AG04449 (cell line): ENCODE measurements at regions of chr13 and their contacts with region 1.

Region 1: GRCh38 chr13:45280751-45281634 is 60.0 kb downstream of the TPT1 start:
- DNase-seq: peak; percentile 29
- H3K4me3 ChIP-seq: no peak overlapping the region
- CTCF ChIP-seq: peak; percentile 88

Region 2: DNA sequence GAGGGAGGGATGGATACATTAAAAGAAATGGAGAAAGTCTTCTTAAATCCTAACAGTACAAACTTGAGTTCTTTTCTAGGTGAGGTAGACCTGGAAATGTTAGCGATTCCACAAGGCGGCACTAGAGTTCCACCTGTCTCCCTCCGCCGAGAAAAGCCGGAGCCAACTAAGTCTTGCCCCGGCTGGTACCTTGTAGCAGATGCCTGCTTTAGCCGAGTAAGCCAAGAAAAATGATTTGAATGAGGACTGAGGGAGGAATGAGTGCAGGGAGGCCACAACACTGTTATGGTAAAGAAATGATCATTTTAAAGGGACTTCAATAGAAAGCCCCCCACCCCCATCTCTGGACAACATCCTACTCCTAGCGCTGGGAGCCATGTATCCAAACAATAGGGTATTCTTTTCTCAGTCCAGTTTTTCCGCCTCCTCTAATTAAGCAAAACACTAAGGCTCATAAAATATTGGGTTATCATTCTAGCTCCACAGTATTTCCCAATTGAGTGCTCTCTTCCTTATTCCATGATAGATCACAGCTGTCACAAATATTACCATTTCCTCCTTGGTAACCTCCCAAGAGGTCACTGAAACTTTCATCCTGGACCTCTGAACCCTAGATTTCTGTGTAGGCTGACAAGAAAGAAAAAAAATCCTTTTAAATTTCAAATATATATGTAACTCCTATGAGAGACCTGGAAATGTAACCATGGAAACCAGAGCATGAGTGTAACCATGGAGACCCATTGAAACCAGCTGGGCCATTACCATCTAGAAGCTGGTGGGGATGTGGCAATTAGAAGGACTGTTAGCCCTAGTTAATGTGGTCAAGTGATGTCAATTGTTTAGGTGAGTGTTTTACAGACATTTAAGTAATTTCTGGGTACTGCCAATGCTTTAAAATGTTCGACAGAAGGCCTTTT is 233.3 kb before region 1 on chr13:
- CTCF ChIA-PET with region 1: interaction called, 221 read pairs
- POLR2A ChIA-PET with region 1: no interaction called
- DNase-seq: peak; percentile 60
- H3K4me3 ChIP-seq: peak overlapping the region; percentile 59
- CTCF ChIP-seq: peak; percentile 74

Region 3: DNA sequence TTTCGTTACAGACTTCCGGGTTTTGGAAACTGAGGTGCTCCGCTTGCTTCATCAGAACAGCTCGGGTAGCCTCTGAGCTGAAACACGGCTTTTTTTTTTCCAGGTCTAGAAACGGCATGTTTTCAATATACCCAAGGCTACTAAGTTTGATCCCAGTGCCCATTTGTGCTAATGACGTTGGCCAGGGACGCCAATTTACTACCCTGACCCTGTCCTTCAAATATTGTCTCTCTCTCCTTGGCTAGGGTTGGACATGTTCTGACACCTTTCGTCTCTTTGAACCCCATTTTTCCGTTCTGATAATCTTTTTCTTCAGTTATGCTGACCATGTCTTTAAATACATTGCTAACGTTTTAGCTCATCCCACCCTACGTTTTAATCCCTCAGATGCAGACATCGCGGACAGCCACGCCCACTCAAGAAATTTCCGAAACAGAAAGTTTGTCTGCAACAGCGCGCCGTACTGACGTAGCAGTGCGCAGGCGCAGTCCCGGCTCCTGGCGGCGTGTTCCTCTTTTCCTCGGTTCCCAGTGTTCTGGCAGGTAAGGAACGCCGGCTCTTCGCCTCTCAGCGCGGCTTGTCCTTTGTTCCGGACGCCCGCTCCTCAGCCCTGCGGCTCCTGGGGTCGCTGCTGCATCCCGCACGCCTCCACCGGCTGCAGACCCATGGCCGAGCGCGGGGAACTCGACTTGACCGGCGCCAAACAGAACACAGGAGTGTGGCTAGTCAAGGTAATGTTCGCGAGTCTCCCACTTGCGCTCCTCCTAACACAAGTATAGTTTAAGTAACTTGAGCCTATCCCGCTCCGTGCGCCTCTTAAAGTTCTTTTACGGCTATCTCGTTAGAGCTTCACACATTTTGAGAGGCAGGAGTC is 160.8 kb before region 1 on chr13 and contains the start of gene GTF2F2:
- CTCF ChIA-PET with region 1: interaction called, 17 read pairs
- POLR2A ChIA-PET with region 1: no interaction called
- DNase-seq: peak; percentile 42
- H3K4me3 ChIP-seq: peak within 1 kb of the TSS; percentile 85
- CTCF ChIP-seq: no peak

Region 4: GRCh38 chr13:45292176-45292575 is 11.2 kb after region 1 on chr13:
- CTCF ChIA-PET with region 1: interaction called, 50 read pairs
- POLR2A ChIA-PET with region 1: no interaction called
- DNase-seq: no peak
- H3K4me3 ChIP-seq: no peak overlapping the region
- CTCF ChIP-seq: no peak

Region 5: GRCh38 chr13:45310341-45311125 is 29.5 kb after region 1 on chr13:
- CTCF ChIA-PET with region 1: interaction called, 19 read pairs
- POLR2A ChIA-PET with region 1: no interaction called
- DNase-seq: no peak
- H3K4me3 ChIP-seq: peak overlapping the region; percentile 23; the same call in 1 of the 2 replicates
- CTCF ChIP-seq: no peak

Region 6: GRCh38 chr13:45807520-45808099 is 526.6 kb after region 1 on chr13:
- CTCF ChIA-PET with region 1: no interaction called
- POLR2A ChIA-PET with region 1: no interaction called
- DNase-seq: no peak
- H3K4me3 ChIP-seq: no peak overlapping the region
- CTCF ChIP-seq: peak; percentile 38